CD8-positive, alpha-beta T cell (primary cell): ENCODE measurements at regions of chr19 and their contacts with region 1.

Region 1: DNA sequence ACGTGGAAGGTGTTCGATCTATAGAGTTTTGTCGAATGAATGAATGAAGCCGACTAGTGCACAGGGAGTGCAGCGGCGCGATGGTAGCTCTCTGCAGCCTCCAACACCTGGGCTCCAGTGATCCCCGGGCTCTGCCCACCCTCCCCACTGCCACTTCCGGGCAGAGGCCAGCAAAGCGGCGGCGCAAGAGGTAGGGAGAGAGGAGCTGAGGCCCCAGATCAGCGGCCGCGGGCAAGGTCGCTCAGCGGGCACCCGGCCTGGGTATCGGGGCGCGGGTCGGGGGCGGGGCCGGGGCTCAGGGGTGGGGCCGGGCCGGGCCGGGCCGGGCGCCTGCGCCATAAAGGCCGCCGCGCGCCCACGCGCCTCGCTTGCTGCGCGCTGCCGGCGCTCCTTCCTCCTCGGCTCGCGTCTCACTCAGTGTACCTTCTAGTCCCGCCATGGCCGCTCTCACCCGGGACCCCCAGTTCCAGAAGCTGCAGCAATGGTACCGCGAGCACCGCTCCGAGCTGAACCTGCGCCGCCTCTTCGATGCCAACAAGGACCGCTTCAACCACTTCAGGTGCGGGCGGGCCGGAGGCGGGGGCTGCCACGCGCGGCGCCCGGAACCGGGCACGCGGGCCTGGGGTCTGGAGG is at the start of gene GPI:
- DNase-seq: peak; percentile 29 to 82 (median 66)
- ATAC-seq: peak; percentile 90
- H3K4me3 ChIP-seq: peak within 1 kb of the TSS; percentile 83 to 93
- H3K4me3 Mint-ChIP-seq: peak within 1 kb of the TSS; percentile 95
- H3K27ac ChIP-seq: peak within 1 kb of the TSS; percentile 66 to 72
- H3K27ac Mint-ChIP-seq: peak within 1 kb of the TSS; percentile 90
- H3K4me1 ChIP-seq: peaks cover 20% of the 10 kb centered on the region
- H3K4me1 Mint-ChIP-seq: peaks cover 38% of the 10 kb centered on the region
- H3K27me3 ChIP-seq: no peaks in the 10 kb centered on the region
- H3K27me3 Mint-ChIP-seq: no peaks in the 10 kb centered on the region
- CTCF ChIP-seq: no peak
- total RNA-seq, gene GPI: 84.8 to 87.0 TPM

Region 2: DNA sequence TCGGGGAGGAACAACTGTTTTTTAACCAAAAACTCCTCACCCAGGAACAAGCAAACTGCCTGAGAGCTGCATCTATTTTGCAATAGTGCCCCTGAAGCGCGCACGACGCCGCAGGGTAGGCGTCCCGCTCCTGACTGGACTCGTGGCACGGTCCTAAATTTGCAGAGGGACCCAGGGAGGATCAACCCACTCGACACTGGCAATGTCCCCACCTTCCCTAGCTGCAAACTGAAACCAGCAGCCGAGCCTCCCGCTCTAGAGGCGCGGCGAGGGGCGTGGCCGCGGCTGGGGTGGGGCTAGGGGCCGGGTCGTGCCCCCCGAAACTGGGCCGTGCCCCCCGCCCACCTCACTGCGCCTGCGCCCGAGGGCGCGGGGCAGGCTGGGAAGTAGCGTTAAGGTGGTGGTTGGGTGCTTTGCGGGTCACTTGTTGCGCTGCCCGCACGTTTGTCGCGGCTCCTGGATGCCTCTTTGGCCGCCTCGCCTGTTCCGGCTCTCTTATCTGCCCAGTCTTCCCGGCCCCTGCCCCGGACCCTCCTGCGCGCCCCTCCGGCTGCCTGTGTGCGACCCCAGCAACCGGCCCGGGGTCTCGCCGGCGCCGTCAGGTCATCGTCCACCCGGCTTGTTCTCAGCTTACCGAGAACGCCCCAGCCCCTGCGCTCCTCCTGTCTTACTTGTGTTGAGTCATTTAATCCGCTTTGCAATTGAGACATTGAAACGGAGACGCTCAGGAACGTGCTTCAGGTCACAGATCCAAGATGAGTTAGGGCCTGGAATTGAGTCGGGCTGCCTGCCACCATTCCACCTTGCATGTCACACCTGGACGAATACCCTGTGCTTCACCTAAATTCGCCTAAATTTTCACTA is 230.5 kb before region 1 on chr19:
- CTCF ChIA-PET with region 1: no interaction called
- POLR2A ChIA-PET with region 1: no interaction called
- intact Hi-C with region 1: loop called in 1 of 2 experiments (anchors 1 kb)
- DNase-seq: peak; percentile 80 to 97 (median 92)
- ATAC-seq: peak; percentile 99
- H3K4me3 ChIP-seq: peak overlapping the region; percentile 80 to 89
- H3K4me3 Mint-ChIP-seq: peak overlapping the region; percentile 90
- H3K27ac ChIP-seq: peak overlapping the region; percentile 72 to 81
- H3K27ac Mint-ChIP-seq: peak overlapping the region; percentile 90
- H3K4me1 ChIP-seq: peaks cover 7% of the 10 kb centered on the region
- H3K4me1 Mint-ChIP-seq: peaks cover 11% of the 10 kb centered on the region
- H3K27me3 ChIP-seq: no peaks in the 10 kb centered on the region
- H3K27me3 Mint-ChIP-seq: no peaks in the 10 kb centered on the region
- CTCF ChIP-seq: no peak

Region 3: DNA sequence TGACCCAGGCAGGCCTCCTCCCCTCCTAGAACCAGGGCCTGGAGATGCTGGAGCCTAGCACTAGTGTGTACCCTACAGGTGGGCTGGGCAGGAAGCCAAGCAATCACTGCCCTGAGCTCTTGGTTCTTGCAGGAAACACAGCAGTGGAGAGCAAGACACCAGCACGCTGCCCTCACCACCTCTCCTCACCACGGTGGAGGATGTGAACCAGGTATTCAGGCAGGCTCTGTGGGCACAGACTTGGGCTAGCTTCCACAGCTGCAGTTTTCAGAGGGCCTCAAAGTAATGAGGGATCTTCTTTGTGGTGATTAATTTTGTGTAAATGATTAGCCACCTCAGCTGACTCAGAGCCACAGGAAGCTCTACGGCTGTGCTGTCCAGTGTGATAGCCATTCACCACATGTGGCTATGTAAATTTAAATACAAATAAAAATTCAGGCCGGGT is 13.5 kb before region 1 on chr19:
- CTCF ChIA-PET with region 1: interaction called, 9 read pairs
- POLR2A ChIA-PET with region 1: interaction called, 8 read pairs
- intact Hi-C with region 1: loop called (anchors 2 kb)
- DNase-seq: peak in 6 of 9 experiments; percentile 13 to 56 (median 38)
- ATAC-seq: no peak
- H3K4me3 ChIP-seq: no peak overlapping the region
- H3K4me3 Mint-ChIP-seq: peak overlapping the region; percentile 37
- H3K27ac ChIP-seq: peak overlapping the region; percentile 7 to 18
- H3K27ac Mint-ChIP-seq: peak overlapping the region; percentile 89
- H3K4me1 ChIP-seq: peaks cover 30% of the 10 kb centered on the region
- H3K4me1 Mint-ChIP-seq: peaks cover 20% of the 10 kb centered on the region
- H3K27me3 ChIP-seq: no peaks in the 10 kb centered on the region
- H3K27me3 Mint-ChIP-seq: no peaks in the 10 kb centered on the region
- CTCF ChIP-seq: no peak

Region 4: GRCh38 chr19:34404109-34404897 is 39.4 kb after region 1 on chr19 and contains the start of gene PDCD2L:
- CTCF ChIA-PET with region 1: no interaction called
- POLR2A ChIA-PET with region 1: interaction called, 3 read pairs
- intact Hi-C with region 1: loop called in 1 of 2 experiments (anchors 2 kb)
- DNase-seq: peak; percentile 81 to 96 (median 94)
- ATAC-seq: peak; percentile 97
- H3K4me3 ChIP-seq: peak within 1 kb of the TSS; percentile 84 to 98
- H3K4me3 Mint-ChIP-seq: peak within 1 kb of the TSS; percentile 93
- H3K27ac ChIP-seq: peak within 1 kb of the TSS; percentile 49 to 74
- H3K27ac Mint-ChIP-seq: peak within 1 kb of the TSS; percentile 88
- H3K4me1 ChIP-seq: peaks cover 3% of the 10 kb centered on the region
- H3K4me1 Mint-ChIP-seq: peaks cover 20% of the 10 kb centered on the region
- H3K27me3 ChIP-seq: no peaks in the 10 kb centered on the region
- H3K27me3 Mint-ChIP-seq: no peaks in the 10 kb centered on the region
- CTCF ChIP-seq: no peak
- total RNA-seq, gene PDCD2L: 6.1 to 6.5 TPM